ENCODE measurements at regions of chr3 and their contacts with region 1.

Region 1: GRCh38 chr3:170751899-170752293 is 118.1 kb downstream of the RPL22L1 start:
- DNase-seq: no peak

Region 2: DNA sequence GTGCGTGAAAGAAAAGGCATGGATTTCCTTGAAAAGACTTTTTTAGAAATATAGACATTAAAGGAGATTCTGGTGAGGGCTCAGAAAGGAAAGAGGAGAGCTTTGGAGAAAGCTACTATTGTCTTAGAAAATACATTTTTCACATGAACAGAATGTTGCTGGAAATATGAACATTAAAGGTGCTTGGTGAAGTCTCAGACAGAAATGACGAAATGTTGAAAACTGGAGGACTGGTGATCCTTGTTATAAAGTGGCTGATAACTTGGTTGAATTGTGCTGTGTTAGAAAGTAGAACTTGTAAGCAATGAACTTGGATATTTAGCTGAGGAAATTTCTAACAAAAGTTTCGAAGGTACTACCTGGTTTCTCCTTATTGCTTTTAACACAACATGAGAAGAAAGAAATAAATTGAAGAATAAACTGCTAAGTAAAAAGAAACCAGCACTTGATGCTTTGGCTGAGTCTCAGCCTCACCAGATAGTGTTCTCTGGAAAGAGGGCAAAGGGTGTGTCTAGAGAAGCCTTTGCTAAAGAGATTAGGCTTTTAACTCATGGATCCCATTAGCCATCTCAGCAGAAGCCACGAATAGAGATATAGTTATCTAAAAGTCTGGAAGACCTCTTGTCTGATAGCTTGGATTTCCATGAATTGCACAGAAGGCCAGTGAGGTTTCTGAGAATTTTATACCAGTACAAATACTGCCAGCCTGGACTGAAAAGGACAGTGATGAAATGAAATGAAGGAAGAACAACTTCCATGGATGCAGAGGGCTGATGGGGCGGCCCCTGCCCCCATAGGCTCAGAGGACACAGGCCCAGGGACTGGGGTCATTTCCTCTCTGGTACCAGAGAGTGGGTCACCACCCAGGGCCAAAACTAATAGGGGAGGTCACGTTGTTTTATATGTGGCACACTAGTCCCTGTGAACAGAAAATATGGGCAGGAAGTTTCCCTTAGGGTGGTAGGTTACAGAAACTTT is 26.6 kb after region 1 on chr3:
- intact Hi-C with region 1: loop called in 1 of 2 experiments (anchors 1 kb)
- DNase-seq: no peak

Measured in posterior vena cava (tissue), 2 donors.